Calu3 (cell line): ENCODE measurements at regions of chr6 and their contacts with region 1.

Region 1: DNA sequence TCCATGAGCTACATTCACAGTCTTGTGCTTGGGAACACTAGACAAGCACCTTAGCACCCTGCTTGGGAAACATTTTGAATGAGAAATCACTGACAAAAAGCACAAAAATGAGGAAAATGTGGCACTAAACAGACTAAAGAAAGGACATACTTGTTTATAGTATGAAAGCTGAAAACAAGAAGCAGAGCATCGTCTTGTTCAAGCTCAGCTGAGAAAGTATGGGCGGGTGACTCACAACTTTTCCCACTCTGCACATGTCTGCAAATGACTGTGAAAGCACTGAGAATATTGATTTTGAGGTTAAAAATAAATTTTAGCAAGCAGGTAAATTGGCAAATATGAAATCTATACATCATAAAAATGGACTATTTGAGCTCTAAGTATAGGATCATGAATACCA is 725.3 kb downstream of the COL12A1 start:
- DNase-seq: peak; percentile 13
- H3K4me3 Mint-ChIP-seq: no peak overlapping the region
- H3K27ac Mint-ChIP-seq: peak overlapping the region; percentile 39
- H3K4me1 Mint-ChIP-seq: peaks cover 25% of the 10 kb centered on the region
- H3K27me3 Mint-ChIP-seq: no peaks in the 10 kb centered on the region
- CTCF ChIP-seq: no peak

Region 2: DNA sequence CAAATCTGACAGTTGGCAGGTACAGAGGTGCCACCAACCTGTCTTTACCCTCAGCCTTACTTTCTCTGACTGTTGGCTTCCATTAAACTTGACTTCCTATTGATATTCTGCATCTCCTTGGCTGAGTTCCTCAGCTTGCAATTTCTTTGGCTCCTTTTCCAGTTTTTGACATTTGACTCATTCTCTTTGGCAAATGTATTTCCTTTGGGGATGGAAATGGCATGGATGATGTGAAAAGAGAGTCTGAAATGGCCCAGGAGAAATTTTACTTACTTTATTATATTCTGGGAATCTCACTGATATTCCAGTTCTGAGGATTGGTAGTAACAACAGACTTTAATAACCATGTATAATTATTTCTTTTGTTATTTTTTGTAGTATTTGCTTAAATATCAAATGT is 529.4 kb before region 1 on chr6:
- CTCF ChIA-PET with region 1: interaction called, 10 read pairs
- intact Hi-C with region 1: no loop called
- DNase-seq: no peak
- H3K4me3 Mint-ChIP-seq: no peak overlapping the region
- H3K27ac Mint-ChIP-seq: no peak overlapping the region
- H3K4me1 Mint-ChIP-seq: no peaks in the 10 kb centered on the region
- H3K27me3 Mint-ChIP-seq: no peaks in the 10 kb centered on the region
- CTCF ChIP-seq: no peak

Region 3: GRCh38 chr6:74128536-74128935 is 352.0 kb before region 1 on chr6:
- CTCF ChIA-PET with region 1: no interaction called
- intact Hi-C with region 1: no loop called
- DNase-seq: no peak
- H3K4me3 Mint-ChIP-seq: no peak overlapping the region
- H3K27ac Mint-ChIP-seq: no peak overlapping the region
- H3K4me1 Mint-ChIP-seq: no peaks in the 10 kb centered on the region
- H3K27me3 Mint-ChIP-seq: no peaks in the 10 kb centered on the region
- CTCF ChIP-seq: no peak

Region 4: DNA sequence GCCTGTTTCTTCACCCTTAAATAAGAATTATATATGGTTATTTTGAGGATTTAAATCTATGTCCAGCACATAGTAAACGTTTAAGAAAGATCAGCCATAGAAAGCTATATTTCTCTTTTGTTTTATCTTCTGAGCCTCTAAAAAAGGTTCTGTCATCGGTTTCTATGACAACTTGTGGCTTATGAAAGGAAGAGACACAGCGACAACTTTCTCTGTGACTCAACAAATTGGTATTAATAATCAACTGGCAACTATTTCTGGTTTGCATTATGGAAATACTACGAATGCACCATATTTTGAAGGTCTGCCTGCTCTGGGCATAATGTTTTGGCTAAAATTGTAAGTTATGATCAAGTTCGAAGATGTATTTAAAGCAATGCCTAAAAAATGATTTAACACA is 33.5 kb before region 1 on chr6:
- CTCF ChIA-PET with region 1: no interaction called
- intact Hi-C with region 1: loop called (anchors 5 kb)
- DNase-seq: no peak
- H3K4me3 Mint-ChIP-seq: no peak overlapping the region
- H3K27ac Mint-ChIP-seq: no peak overlapping the region
- H3K4me1 Mint-ChIP-seq: peaks cover 18% of the 10 kb centered on the region
- H3K27me3 Mint-ChIP-seq: no peaks in the 10 kb centered on the region
- CTCF ChIP-seq: no peak

Region 5: GRCh38 chr6:74534465-74535211 is 54.1 kb after region 1 on chr6:
- CTCF ChIA-PET with region 1: no interaction called
- intact Hi-C with region 1: no loop called
- DNase-seq: peak; percentile 47
- H3K4me3 Mint-ChIP-seq: peak overlapping the region; percentile 50
- H3K27ac Mint-ChIP-seq: peak overlapping the region; percentile 99
- H3K4me1 Mint-ChIP-seq: peaks cover 29% of the 10 kb centered on the region
- H3K27me3 Mint-ChIP-seq: no peaks in the 10 kb centered on the region
- CTCF ChIP-seq: no peak